HAP-1 (cell line): ENCODE measurements at regions of chrX and their contacts with region 1.

Region 1: GRCh38 chrX:74015379-74016019 is 288.5 kb upstream of the ZCCHC13 start:
- DNase-seq: peak; percentile 73 to 82
- H3K4me3 ChIP-seq: no peak overlapping the region
- H3K4me1 ChIP-seq: no peaks in the 10 kb centered on the region
- H3K27me3 ChIP-seq: no peaks in the 10 kb centered on the region

Region 2: DNA sequence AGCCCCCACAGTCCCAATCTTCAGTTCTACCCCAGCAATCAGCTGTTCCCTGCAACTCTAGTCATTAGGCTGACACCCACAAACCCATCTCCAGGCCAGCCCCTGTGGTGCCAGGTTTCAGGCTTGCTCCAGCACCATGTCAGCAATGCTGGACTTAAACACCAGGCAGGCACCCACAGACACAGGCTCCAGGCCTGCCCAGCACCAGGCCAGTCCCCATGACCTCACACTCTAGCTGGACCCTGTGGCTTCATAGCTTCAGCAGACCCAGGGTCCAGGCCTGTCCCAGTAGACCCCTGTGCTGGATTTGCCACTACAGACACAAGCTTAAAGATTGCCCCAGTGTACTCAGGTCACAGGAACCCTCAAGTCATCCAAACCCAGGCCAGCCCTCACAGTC is 152.2 kb before region 1 on chrX:
- in situ Hi-C with region 1: loop called (anchors 5 kb)
- DNase-seq: no peak
- H3K4me3 ChIP-seq: no peak overlapping the region
- H3K4me1 ChIP-seq: no peaks in the 10 kb centered on the region
- H3K27me3 ChIP-seq: no peaks in the 10 kb centered on the region